MCF 10A (cell line): ENCODE measurements at regions of chr15 and their contacts with region 1.

Region 1: DNA sequence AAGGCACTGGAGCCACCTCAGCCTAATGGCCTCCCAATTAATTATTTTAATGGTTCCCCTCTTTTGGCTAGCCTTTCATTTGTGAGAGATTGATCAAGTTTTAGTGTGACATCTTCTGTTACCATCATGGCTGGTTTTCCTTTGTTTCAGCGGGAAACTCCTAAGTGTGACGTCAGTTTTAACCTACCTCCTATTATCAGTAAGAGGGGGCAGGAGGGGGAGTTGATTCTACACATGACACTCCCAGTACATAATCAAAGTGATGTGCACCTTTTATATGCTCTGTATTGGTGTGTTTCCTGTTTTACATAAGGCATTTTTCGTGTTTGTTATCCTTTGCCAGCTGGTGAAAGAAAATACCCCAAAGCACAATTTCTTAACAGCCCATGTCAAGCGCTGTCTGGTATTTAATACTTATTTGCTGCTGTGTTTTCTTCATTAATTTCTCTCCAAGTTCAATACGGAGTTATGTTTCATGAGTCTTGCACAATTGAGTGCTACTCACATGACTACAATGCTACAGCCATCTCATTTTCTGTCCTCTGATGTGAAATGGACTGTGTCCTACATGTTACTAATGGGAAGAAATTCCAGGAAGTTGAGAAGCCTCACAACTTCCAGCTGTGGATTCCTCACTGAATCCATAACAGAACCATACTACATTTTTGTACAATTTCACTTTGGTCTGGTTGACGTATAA is 52.2 kb upstream of the POLR2M start:
- DNase-seq: peak; percentile 51
- H3K4me3 Mint-ChIP-seq: no peak overlapping the region
- H3K27ac Mint-ChIP-seq: peak overlapping the region; percentile 12
- H3K4me1 Mint-ChIP-seq: peaks cover 27% of the 10 kb centered on the region
- H3K27me3 Mint-ChIP-seq: no peaks in the 10 kb centered on the region
- CTCF ChIP-seq: no peak

Region 2: DNA sequence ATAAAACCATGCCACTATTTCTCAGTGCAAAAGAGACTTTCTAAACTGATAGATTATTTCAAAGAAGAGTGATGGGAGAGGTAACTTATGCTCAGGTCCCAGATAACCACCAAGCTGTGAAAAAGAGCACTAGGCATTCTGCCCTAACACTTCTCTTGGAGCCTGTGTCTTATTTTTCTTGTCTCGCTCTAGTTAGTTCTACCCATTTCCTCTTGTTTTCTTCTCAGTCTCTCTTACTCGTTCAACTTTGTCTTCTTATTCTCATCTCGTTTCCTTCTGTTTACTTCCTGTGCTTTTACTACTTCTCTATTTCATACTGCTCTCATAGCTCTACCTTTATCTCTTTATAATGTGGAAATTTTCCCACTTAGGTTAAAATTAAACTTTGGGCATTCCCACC is 369.8 kb before region 1 on chr15:
- CTCF ChIA-PET with region 1: no interaction called
- POLR2A ChIA-PET with region 1: no interaction called
- intact Hi-C with region 1: no loop called
- DNase-seq: no peak
- H3K4me3 Mint-ChIP-seq: no peak overlapping the region
- H3K27ac Mint-ChIP-seq: no peak overlapping the region
- H3K4me1 Mint-ChIP-seq: no peaks in the 10 kb centered on the region
- H3K27me3 Mint-ChIP-seq: no peaks in the 10 kb centered on the region
- CTCF ChIP-seq: peak; percentile 2

Region 3: GRCh38 chr15:57640935-57641682 is 13.2 kb before region 1 on chr15:
- CTCF ChIA-PET with region 1: interaction called, 10 read pairs
- POLR2A ChIA-PET with region 1: interaction called, 3 read pairs
- intact Hi-C with region 1: no loop called
- DNase-seq: peak; percentile 51
- H3K4me3 Mint-ChIP-seq: no peak overlapping the region
- H3K27ac Mint-ChIP-seq: no peak overlapping the region
- H3K4me1 Mint-ChIP-seq: no peaks in the 10 kb centered on the region
- H3K27me3 Mint-ChIP-seq: no peaks in the 10 kb centered on the region
- CTCF ChIP-seq: peak; percentile 8

Region 4: DNA sequence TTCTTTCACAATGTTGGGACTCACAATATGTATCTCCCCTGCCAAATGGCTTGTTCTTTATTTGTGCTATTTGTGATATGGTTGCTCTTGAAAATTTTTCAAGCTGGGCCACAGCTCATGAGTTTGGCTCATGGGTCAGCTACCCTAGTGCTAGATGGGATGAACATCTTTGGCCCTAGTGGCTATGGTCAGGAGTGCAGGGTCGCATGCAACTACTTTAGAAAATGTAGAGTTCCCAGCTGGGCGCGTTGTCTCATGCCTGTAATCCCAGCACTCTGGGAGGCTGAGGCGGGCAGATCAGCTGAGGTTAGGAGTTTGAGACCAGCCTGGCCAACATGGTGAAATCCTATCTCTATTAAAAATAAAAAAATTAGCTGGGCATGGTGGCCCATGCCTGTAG is 108.0 kb after region 1 on chr15:
- CTCF ChIA-PET with region 1: no interaction called
- POLR2A ChIA-PET with region 1: no interaction called
- intact Hi-C with region 1: no loop called
- DNase-seq: no peak
- H3K4me3 Mint-ChIP-seq: no peak overlapping the region
- H3K27ac Mint-ChIP-seq: no peak overlapping the region
- H3K4me1 Mint-ChIP-seq: no peaks in the 10 kb centered on the region
- H3K27me3 Mint-ChIP-seq: no peaks in the 10 kb centered on the region
- CTCF ChIP-seq: no peak